SK-N-SH (cell line): ENCODE measurements at regions of chrX and their contacts with region 1.

Region 1: DNA sequence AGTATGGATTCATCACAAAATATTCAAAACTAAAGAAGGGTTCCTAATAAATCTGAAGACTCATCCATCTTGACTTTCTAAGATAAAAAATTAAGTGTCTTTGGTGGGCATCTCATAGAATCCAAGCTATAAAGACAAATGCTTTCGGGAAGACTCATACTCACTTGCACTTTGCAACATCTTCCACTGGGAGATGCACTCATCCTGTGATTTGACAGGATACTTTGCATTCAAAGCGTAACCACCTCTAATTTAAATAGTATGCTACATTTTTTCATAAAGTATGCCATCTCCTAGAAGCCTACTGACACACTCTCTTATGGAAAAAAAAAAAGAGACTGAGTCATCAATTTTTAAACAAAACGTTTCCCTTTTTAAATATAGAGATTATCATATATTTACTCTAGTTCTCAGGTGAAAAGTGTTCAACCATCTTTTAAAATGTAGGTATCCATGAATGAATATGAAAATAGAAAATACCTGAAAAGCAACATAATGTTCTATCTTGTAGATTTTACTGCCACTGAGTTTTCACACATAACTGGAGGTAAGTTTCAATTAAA is 119.6 kb downstream of the KLHL13 start:
- DNase-seq: peak; percentile 14
- H3K4me3 ChIP-seq: no peak overlapping the region
- H3K27ac ChIP-seq: peak overlapping the region; percentile 28 to 31; a peak in 3 of 4 replicates
- H3K4me1 ChIP-seq: peaks cover 0 to 2% of the 10 kb centered on the region in 2 experiments; a peak in 2 of 4 replicates
- H3K27me3 ChIP-seq: no peaks in the 10 kb centered on the region
- CTCF ChIP-seq: peak; percentile 65
- EP300 ChIP-seq: no peak
- RAD21 ChIP-seq: peak; percentile 76

Region 2: DNA sequence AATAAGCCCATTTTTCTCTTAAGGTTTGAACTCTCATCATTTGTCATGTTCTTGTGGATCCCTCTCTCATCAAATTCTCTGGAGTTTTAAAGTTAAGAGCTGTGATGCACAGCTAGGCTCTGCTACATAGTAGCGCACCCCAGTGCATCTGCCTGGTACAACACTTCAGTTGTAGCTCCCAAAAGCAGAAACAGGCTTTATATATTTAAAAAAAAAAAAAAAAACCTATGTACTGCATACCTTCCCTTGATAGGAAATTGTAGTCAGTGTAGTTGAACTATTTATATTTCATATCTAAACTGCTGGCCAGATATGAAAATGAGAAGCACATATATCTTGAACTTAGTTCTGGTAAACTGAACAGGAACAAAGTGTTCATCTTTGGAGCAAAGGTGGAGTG is 11.8 kb before region 1 on chrX:
- CTCF ChIA-PET with region 1: interaction called, 15 read pairs
- POLR2A ChIA-PET with region 1: no interaction called
- DNase-seq: peak; percentile 16
- H3K4me3 ChIP-seq: no peak overlapping the region
- H3K27ac ChIP-seq: peak overlapping the region in 1 of 2 experiments; percentile 16; a peak in 1 of 4 replicates
- H3K4me1 ChIP-seq: peaks cover 0 to 8% of the 10 kb centered on the region in 2 experiments; a peak in 3 of 4 replicates
- H3K27me3 ChIP-seq: no peaks in the 10 kb centered on the region
- CTCF ChIP-seq: peak; percentile 40
- EP300 ChIP-seq: no peak
- RAD21 ChIP-seq: peak; percentile 61

Region 3: DNA sequence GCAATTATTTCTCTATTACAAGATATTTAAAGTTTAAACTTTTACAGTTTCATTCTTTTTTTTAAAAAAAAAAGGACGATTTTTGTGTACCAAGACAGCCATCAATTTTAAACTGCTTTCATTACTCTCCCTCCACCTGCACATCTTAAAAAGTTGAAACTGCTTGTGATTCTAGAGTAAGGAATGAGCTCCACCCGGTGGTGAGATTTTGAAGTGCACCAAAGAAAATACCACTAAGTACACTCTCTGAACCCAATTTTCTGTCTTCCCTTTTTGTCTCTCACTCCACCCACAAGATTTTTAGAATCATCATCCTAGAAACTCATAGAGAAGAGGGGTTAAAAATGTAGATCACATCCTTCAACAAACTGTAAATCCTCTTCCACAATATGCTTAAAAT is 257.6 kb after region 1 on chrX:
- CTCF ChIA-PET with region 1: interaction called, 10 read pairs
- POLR2A ChIA-PET with region 1: no interaction called
- DNase-seq: peak; percentile 38
- H3K4me3 ChIP-seq: no peak overlapping the region
- H3K27ac ChIP-seq: no peak overlapping the region
- H3K4me1 ChIP-seq: no peaks in the 10 kb centered on the region; a peak in 1 of 4 replicates
- H3K27me3 ChIP-seq: no peaks in the 10 kb centered on the region
- CTCF ChIP-seq: peak; percentile 85
- EP300 ChIP-seq: no peak
- RAD21 ChIP-seq: peak; percentile 86